ENCODE measurements at regions of chr1 and their contacts with region 1.

Region 1: GRCh38 chr1:48202030-48202752 is 20.3 kb upstream of the SLC5A9 start:
- DNase-seq: peak; percentile 80
- H3K4me3 Mint-ChIP-seq: no peak overlapping the region
- H3K27ac Mint-ChIP-seq: no peak overlapping the region
- H3K4me1 Mint-ChIP-seq: peaks cover 4% of the 10 kb centered on the region
- H3K27me3 Mint-ChIP-seq: peaks cover 2% of the 10 kb centered on the region

Region 2: DNA sequence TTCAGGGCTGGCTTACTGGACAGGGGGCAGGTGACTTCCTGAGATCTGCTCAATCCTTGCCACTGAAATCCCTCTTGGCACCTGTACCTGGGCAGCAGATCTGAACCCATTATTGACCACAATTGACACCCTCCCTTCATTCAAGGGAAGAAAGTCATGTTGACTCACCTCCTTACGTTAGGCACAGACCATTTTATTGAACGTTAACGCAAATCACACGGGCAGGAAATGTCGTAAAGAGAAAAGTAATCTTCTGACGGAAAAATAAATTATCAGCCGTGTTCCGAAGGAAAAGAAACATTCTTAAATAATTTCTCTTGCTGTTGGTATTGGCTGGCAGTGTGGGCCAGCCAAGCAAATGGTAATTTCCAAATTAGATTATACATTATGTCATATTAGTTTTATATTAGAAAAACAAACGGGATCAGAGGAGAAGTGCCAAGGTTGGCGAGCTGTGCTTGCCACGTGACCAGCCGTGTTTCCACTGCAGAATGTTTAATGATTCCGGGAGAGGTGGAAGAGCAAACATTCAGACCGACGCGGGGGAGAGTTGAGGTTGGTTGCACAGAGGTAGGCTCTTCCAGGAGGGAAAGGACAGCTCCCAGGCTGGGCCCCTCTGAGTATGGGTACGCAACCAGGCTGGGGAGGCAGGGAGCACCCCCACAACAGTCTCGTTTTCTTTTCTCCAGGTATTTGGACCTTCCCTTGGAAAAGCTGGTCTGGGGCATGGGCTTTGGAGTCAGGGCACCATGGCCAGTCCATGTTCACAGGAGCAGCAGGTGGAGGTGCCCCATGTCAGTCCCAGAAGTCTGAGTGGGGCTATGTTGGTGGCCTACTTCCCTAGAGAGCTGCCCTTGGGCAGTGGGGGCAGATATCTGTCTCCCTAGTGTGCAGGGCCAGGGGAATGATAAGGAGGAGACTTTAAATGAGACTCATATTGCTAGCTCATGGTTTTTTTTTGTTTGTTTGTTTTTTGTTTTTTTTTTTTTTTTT is 643.3 kb before region 1 on chr1:
- CTCF ChIA-PET with region 1: no interaction called
- intact Hi-C with region 1: no loop called
- DNase-seq: no peak
- H3K4me3 Mint-ChIP-seq: no peak overlapping the region
- H3K27ac Mint-ChIP-seq: no peak overlapping the region
- H3K4me1 Mint-ChIP-seq: no peaks in the 10 kb centered on the region
- H3K27me3 Mint-ChIP-seq: peaks cover 14% of the 10 kb centered on the region

Region 3: DNA sequence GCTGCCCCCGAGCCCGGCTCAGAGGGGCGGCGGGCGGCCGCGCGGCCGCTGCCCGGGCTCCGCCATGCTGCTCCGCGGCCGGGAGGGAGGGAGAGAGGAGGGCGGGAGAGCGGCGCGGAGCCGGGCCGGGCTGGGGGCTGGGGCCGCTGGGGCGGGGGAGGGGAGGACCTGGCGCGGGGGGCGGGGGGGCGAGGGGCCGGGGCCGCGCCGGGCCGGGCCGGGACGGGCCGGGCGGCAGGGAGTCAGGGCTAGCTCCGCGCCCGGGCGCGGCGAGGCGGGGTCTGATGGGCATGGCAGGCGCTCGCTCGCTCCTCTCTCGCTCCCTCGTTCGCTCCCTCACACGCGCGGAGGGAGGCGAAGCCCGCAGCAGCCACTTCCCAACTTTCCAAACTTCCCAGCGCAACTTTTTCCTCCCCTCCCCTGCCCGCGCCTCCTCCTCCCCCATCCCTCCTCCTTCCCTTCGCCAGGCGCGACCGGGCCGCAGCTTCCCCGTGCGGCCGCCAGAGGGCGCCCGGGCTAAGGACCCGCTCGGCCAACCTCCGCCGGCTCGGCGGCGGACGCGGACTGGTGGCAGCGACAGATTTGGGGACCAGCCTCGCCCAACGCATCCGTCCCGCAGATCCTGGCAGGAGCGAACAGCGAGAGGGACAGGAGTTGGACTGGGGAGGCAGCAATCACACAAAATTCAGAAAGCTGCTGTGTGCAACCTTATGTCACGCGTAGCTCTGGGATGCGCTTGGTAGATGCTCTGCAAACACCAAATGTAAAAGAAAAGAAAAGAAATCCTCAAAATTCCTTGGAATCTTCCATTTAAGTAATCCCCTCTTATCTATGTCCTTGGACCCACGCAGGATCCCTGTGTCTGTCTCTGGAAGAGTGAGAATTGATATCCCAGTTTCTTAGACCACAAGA is 204.6 kb before region 1 on chr1 and contains the start of gene TRABD2B:
- CTCF ChIA-PET with region 1: no interaction called
- intact Hi-C with region 1: loop called (anchors 10 kb)
- DNase-seq: peak; percentile 65
- H3K4me3 Mint-ChIP-seq: peak within 1 kb of the TSS; percentile 68
- H3K27ac Mint-ChIP-seq: no peak within 1 kb of the TSS
- H3K4me1 Mint-ChIP-seq: peaks cover 4% of the 10 kb centered on the region
- H3K27me3 Mint-ChIP-seq: peaks cover 50% of the 10 kb centered on the region
- total RNA-seq, gene TRABD2B: not detected

Region 4: GRCh38 chr1:48093696-48094528 is 108.3 kb before region 1 on chr1:
- CTCF ChIA-PET with region 1: interaction called, 19 read pairs
- intact Hi-C with region 1: loop called (anchors 1 kb)
- DNase-seq: peak; percentile 88
- H3K4me3 Mint-ChIP-seq: peak overlapping the region; percentile 42
- H3K27ac Mint-ChIP-seq: no peak overlapping the region
- H3K4me1 Mint-ChIP-seq: peaks cover 5% of the 10 kb centered on the region
- H3K27me3 Mint-ChIP-seq: peaks cover 45% of the 10 kb centered on the region

Region 5: GRCh38 chr1:48109390-48110013 is 92.7 kb before region 1 on chr1:
- CTCF ChIA-PET with region 1: interaction called, 29 read pairs
- intact Hi-C with region 1: loop called (anchors 1 kb)
- DNase-seq: peak; percentile 17
- H3K4me3 Mint-ChIP-seq: no peak overlapping the region
- H3K27ac Mint-ChIP-seq: no peak overlapping the region
- H3K4me1 Mint-ChIP-seq: peaks cover 4% of the 10 kb centered on the region
- H3K27me3 Mint-ChIP-seq: peaks cover 20% of the 10 kb centered on the region

Region 6: DNA sequence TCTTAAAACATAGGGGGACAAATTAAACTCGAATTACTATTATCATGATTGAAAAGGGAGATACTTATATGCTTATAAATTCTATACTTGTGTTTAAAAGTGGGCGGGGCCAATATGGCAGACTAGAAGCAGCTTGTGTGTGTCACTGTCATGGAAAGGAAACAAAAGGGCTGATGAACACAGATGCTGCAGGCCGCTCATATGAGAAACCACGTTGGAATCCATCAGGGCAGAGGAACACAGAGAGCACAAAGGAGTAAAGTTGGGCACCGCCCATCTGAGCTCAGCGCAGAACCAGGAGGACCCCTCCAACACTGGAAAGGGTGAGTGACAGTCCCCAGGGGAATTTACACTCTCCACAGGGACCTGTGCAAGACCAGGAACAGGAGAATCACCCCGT is 127.3 kb after region 1 on chr1:
- CTCF ChIA-PET with region 1: no interaction called
- intact Hi-C with region 1: no loop called
- DNase-seq: no peak
- H3K4me3 Mint-ChIP-seq: no peak overlapping the region
- H3K27ac Mint-ChIP-seq: no peak overlapping the region
- H3K4me1 Mint-ChIP-seq: no peaks in the 10 kb centered on the region
- H3K27me3 Mint-ChIP-seq: peaks cover 3% of the 10 kb centered on the region

Measured in activated naive CD4-positive, alpha-beta T cell treated with anti-CD3 and anti-CD28 coated beads for 36 hours (primary cell).